Motor neuron (in vitro differentiated cells): ENCODE measurements at regions of chr20 and their contacts with region 1.

Region 1: DNA sequence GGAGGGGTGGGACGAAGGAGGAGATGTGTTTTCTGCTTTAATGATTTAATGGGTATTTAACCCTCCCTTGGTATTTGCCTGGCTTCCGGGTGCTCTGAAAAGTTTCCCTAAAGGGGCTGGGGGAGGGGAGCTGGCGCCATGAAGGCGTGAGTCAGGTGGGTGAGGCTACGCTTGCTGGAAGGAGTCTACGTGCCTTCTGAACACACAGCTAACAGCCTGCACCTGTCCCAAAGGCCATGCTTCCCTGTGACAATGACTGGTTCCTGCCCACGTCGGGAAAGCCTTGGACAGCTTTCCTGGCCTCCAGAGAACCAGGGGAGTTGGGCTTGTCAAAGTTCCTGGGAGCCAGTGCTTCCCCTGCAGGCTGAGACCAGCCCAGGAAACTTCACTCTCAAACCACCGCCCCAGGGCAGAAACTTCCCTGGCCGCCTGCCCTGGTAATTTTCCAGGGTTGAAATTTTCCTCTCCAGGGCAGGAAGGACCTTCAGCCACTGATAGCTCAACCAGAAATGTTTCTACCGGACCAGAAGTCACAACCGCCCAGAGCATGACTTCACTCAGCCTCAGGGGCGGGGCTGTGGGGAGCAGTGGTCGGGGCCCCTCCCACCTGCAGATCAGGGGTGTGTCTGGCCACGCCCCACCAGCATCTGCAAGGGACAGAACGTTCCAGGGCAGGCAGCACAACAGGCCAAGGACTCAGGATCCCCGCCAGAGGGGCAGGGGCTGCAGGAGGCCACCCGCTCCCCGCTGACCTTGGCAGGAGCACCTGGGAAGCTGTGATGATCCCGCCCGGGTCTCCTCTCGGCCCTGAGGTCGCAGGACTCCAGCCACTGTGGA is 18.6 kb upstream of the SLCO4A1 start:
- ATAC-seq: peak; percentile 73 to 94 (median 86)
- H3K4me3 ChIP-seq: no peak overlapping the region
- H3K27ac ChIP-seq: peak overlapping the region in 1 of 2 donors; percentile 20
- H3K4me1 ChIP-seq: peaks cover 10 to 17% of the 10 kb centered on the region in 2 donors

Region 2: DNA sequence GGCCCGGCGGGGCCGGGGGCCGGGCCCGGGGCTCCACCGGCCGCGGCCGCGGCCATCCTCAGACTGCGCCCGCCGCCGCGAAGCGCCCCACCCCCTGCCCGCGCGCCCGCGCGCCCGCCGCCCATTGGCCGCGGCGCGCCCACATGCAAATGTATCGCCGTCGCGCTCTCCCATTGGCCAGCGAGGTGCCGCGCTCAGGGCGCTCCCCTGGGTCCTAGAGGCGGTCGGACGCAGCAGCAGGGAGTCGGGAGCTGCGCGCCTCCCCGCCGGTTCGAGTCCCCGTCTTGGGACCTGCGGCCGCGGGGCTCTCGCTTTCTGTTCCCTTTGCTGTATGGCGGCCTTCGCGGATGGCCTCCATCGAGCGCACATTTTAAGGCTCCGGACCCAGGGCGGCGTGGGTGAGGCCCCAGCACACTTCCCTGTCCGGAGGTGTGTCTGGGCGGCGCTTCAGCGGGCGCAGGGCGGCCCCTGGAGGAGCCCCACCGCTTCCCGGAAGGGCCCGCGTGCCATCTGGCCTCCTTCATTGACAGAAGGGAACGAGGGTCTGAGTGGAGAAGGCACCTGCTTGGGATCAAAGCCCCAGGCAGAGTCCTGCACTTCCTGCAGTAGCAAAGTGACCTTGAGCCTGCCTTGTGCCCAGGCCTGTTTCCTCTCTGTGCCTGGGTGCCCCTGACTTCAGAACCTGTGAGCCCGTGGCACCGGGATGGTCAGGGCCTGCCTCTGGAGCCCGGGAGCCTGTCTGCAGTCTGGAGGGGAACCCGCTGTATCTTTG is 216.3 kb before region 1 on chr20 and contains the start of gene CABLES2:
- in situ Hi-C with region 1: loop called in 3 of 9 experiments (anchors 10 to 25 kb)
- ATAC-seq: peak; percentile 81 to 93 (median 86)
- H3K4me3 ChIP-seq: peak within 1 kb of the TSS; percentile 67 to 97 (median 74)
- H3K27ac ChIP-seq: peak within 1 kb of the TSS; percentile 21 to 47
- H3K4me1 ChIP-seq: peaks cover 20 to 23% of the 10 kb centered on the region in 2 donors
- total RNA-seq, gene CABLES2: 1.4 to 9.6 (median 5.7) TPM

Region 3: GRCh38 chr20:62500237-62500864 is 123.4 kb before region 1 on chr20:
- in situ Hi-C with region 1: loop called in 6 of 9 experiments (anchors 10 to 25 kb)
- ATAC-seq: peak; percentile 40 to 87 (median 52)
- H3K4me3 ChIP-seq: no peak overlapping the region
- H3K27ac ChIP-seq: no peak overlapping the region
- H3K4me1 ChIP-seq: peaks cover 31 to 42% of the 10 kb centered on the region in 2 donors